GM10248 (cell line): ENCODE measurements at regions of chr1 and their contacts with region 1.

Region 1: GRCh38 chr1:224938652-224939051 is 9.2 kb downstream of the DNAH14 start:
- DNase-seq: no peak
- CTCF ChIP-seq: no peak

Region 2: GRCh38 chr1:224922404-224923164 is 16.1 kb before region 1 on chr1:
- CTCF ChIA-PET with region 1: interaction called, 10 read pairs
- POLR2A ChIA-PET with region 1: no interaction called
- DNase-seq: peak; percentile 56
- CTCF ChIP-seq: peak; percentile 54